WTC11 (cell line): ENCODE measurements at regions of chr3 and their contacts with region 1.

Region 1: DNA sequence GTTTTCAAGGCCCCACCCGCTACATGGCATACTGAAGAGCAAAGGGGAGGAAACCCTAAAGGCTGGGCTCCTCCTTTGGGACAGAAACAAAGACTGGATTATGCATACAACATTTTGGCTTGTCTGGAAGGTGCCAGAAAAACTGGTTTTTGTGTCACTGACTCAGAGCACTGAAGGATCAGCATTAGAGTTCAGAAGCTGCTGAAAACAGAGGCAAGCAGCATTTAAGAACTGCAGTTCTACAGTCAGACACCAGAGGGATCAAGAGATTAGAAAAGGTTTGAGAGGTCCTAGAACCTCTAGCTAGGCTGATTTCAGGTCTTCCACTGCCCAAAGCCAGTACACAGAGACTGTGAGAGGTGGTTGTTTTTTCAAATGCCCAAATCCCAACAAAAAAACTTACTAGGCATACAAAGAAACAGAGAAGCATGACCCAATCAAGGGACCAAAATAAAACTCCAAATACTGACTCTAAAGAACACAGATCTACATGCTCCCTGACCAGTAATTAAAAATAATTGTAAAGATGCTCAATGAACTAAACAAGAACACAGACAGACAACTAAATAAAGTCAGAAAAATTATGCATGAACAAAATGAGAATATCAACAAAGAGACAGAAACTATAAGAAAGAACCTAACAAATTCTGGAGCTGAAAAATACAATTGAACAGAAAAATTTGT is 91.2 kb downstream of the SENP2 start:
- DNase-seq: no peak
- ATAC-seq: peak; percentile 97
- H3K4me3 Mint-ChIP-seq: no peak overlapping the region
- H3K27ac Mint-ChIP-seq: peak overlapping the region; percentile 29
- H3K4me1 Mint-ChIP-seq: peaks cover 8% of the 10 kb centered on the region
- H3K27me3 Mint-ChIP-seq: no peaks in the 10 kb centered on the region
- CTCF ChIP-seq: peak; percentile 74

Region 2: GRCh38 chr3:185711255-185711870 is 34.1 kb after region 1 on chr3:
- CTCF ChIA-PET with region 1: interaction called, 11 read pairs
- POLR2A ChIA-PET with region 1: no interaction called
- DNase-seq: no peak
- ATAC-seq: peak; percentile 14
- H3K4me3 Mint-ChIP-seq: no peak overlapping the region
- H3K27ac Mint-ChIP-seq: peak overlapping the region; percentile 78
- H3K4me1 Mint-ChIP-seq: peaks cover 65% of the 10 kb centered on the region
- H3K27me3 Mint-ChIP-seq: no peaks in the 10 kb centered on the region
- CTCF ChIP-seq: no peak

Region 3: DNA sequence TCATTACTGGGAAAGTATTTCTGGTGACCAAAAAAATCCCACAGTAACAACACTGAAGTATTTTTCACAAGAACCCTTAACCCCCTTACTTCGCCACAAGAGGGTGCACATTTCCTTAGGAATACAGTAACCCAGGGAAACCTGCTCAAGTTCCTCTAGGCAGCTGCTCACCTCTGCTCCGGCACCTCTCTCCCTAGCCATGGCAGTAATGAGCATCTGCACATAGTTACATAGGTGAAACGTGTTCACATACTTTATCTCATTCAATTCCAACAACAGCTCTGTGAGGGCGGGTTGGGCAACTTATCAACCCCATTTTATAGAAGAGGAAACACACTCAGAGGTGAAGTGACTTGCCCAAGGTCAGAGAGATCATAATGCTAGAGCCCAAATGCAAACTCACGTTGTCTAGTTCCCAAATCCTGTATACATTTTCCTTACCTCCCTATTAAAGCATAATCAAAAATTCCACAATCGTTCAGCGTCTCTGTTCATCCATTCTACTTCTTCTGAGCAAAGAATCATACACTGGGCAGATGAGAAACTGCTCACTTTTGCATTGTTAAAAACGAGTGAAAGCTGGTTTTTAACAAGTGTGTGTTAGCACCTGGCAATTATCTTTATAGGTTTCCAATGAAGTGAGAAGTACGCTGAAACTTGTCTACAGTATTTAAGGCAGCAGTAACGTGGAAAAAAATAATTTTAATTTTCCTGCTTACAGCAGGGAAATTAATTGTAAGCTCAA is 56.9 kb after region 1 on chr3:
- CTCF ChIA-PET with region 1: interaction called, 10 read pairs
- POLR2A ChIA-PET with region 1: no interaction called
- DNase-seq: peak; percentile 65
- ATAC-seq: peak; percentile 95
- H3K4me3 Mint-ChIP-seq: no peak overlapping the region
- H3K27ac Mint-ChIP-seq: peak overlapping the region; percentile 95
- H3K4me1 Mint-ChIP-seq: peaks cover 65% of the 10 kb centered on the region
- H3K27me3 Mint-ChIP-seq: no peaks in the 10 kb centered on the region
- CTCF ChIP-seq: peak; percentile 46; the same call in 1 of the 2 replicates

Region 4: DNA sequence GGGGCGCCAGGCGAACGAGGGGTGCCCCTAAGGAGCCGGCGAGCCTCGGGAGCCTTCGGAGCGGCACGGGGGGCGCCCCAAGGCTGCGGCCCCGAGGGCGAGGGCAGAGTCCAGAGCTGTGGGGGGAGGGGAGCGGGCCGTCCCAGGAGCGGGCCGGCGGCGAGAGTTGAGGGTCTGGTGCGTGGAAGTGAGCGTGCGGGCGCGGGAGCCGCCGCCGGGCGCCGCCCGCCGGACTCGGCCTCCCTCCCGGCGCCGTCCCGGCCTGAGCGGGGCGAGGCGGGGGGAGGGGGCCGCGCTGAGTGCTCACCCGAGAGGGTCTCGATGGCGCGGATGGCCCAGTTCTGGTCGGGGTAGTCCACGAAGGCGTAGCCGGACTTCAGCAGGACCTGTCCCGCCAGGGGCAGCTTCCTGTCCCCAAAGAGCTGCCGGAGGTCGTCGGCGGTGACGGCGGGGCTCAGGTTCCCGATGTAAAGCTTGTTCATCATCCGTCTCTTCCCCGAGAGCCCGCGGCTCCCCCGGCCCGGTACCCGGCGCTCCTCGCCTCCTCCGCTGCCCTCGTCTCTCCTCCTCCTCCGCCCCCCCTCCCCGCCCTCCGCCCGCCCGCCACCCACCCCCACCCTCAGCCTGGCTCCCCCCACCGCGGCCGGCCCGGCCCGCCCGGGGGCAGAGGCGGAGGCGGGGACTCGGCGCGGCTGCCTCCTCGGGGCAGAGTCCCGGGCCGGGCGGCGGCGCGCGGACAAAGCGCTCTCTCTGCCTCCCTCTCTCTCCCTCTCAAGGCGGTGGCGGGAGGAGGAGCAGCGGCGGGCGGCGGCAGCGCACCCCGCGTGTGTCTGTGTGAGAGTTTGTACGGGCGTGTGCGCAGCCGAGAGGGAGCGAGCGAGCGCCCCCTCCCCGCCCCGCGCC is 147.4 kb after region 1 on chr3 and contains the start of gene IGF2BP2:
- CTCF ChIA-PET with region 1: interaction called, 10 read pairs
- POLR2A ChIA-PET with region 1: no interaction called
- DNase-seq: peak; percentile 81
- ATAC-seq: peak; percentile 63
- H3K4me3 Mint-ChIP-seq: peak within 1 kb of the TSS; percentile 89
- H3K27ac Mint-ChIP-seq: peak within 1 kb of the TSS; percentile 88
- H3K4me1 Mint-ChIP-seq: peaks cover 42% of the 10 kb centered on the region
- H3K27me3 Mint-ChIP-seq: peaks cover 16% of the 10 kb centered on the region
- CTCF ChIP-seq: no peak
- total RNA-seq, gene IGF2BP2: 133 to 157 TPM (median 150 TPM) in 3 replicates

Region 5: GRCh38 chr3:186035277-186035676 is 358.0 kb after region 1 on chr3:
- CTCF ChIA-PET with region 1: no interaction called
- POLR2A ChIA-PET with region 1: no interaction called
- DNase-seq: no peak
- ATAC-seq: no peak
- H3K4me3 Mint-ChIP-seq: no peak overlapping the region
- H3K27ac Mint-ChIP-seq: no peak overlapping the region
- H3K4me1 Mint-ChIP-seq: no peaks in the 10 kb centered on the region
- H3K27me3 Mint-ChIP-seq: no peaks in the 10 kb centered on the region; the same call in 1 of the 2 replicates
- CTCF ChIP-seq: no peak